IMR-90 (cell line): ENCODE measurements at regions of chr5 and their contacts with region 1.

Region 1: GRCh38 chr5:132506094-132506692 is 15.6 kb upstream of the IRF1 start:
- DNase-seq: peak; percentile 98
- ATAC-seq: peak; percentile 91
- H3K4me3 ChIP-seq: no peak overlapping the region
- H3K27ac ChIP-seq: peak overlapping the region; percentile 99
- H3K4me1 ChIP-seq: peaks cover 26% of the 10 kb centered on the region
- H3K27me3 ChIP-seq: no peaks in the 10 kb centered on the region
- CTCF ChIP-seq: peak; percentile 85
- POLR2A ChIP-seq: no peak
- RAD21 ChIP-seq: peak; percentile 65

Region 2: DNA sequence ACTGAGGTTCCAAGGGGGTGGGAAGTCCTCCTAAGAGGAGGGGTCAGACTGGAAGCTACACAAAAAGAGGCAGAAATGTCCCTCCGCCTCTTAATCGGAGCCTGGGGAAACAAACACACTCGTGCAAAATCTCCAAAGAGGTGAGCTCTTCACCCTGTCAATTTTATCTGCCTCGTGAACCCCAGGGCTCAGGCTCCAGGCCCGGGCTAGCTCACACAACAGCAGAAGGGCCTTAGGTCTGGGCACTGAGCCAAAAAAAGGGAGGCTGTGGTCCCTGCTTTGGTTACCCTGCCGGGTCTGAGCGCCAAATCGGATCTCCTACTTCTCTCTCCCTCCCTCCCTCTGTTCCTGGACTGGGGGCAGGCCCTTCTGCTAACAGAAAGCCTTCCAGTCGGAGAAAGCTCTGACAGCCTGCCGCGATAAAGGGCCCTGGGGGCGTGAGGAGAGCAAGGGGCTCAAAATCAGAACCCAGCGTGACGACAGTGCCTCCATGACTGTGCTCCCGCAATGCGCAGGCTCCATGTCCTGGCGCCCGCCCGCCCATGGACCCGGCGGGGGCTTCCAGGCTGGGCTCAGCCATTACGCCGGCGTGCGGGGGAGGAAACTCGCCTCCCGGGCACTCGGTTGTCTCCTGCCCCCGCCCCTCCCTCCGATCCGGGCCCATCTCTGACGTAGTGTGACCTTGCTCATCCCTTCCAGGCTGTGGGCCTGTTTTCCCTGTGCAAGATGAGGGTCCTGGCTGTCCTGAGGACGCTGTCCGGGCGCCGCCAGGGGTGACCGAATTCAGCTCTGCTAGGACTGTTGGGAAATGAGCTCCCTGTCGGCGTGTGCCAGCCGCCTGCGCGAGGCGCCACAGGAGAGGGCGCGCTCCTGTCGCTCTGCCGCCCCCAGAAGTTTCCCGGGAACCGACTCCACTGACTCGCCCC is 212.9 kb before region 1 on chr5:
- CTCF ChIA-PET with region 1: no interaction called
- POLR2A ChIA-PET with region 1: no interaction called
- dilution Hi-C with region 1: no loop called
- in situ Hi-C with region 1: no loop called
- intact Hi-C with region 1: loop called (anchors 5 kb)
- DNase-seq: peak; percentile 87
- ATAC-seq: peak; percentile 59
- H3K4me3 ChIP-seq: peak overlapping the region; percentile 74
- H3K27ac ChIP-seq: peak overlapping the region; percentile 99
- H3K4me1 ChIP-seq: peaks cover 12% of the 10 kb centered on the region
- H3K27me3 ChIP-seq: no peaks in the 10 kb centered on the region
- CTCF ChIP-seq: 0 out of 2 replicates have a peak, but pooled peaks have one; percentile 21
- POLR2A ChIP-seq: peak; percentile 63
- RAD21 ChIP-seq: no peak; the same call in 1 of the 2 replicates

Region 3: GRCh38 chr5:132426525-132427138 is 79.6 kb before region 1 on chr5:
- CTCF ChIA-PET with region 1: interaction called, 11 read pairs
- POLR2A ChIA-PET with region 1: no interaction called
- dilution Hi-C with region 1: no loop called
- in situ Hi-C with region 1: no loop called
- intact Hi-C with region 1: no loop called
- DNase-seq: peak; percentile 97
- ATAC-seq: peak; percentile 68
- H3K4me3 ChIP-seq: no peak overlapping the region
- H3K27ac ChIP-seq: peak overlapping the region; percentile 90
- H3K4me1 ChIP-seq: peaks cover 51% of the 10 kb centered on the region
- H3K27me3 ChIP-seq: no peaks in the 10 kb centered on the region
- CTCF ChIP-seq: peak; percentile 51
- POLR2A ChIP-seq: peak; percentile 69; the same call in 1 of the 2 replicates
- RAD21 ChIP-seq: peak; percentile 44

Region 4: GRCh38 chr5:132556763-132557477 is 50.7 kb after region 1 on chr5 and contains the start of gene RAD50:
- CTCF ChIA-PET with region 1: interaction called, 3 read pairs
- POLR2A ChIA-PET with region 1: interaction called, 3 read pairs
- dilution Hi-C with region 1: no loop called
- in situ Hi-C with region 1: no loop called
- intact Hi-C with region 1: loop called (anchors 5 kb)
- DNase-seq: peak; percentile 84
- ATAC-seq: peak; percentile 98
- H3K4me3 ChIP-seq: peak within 1 kb of the TSS; percentile 65
- H3K27ac ChIP-seq: peak within 1 kb of the TSS; percentile 68
- H3K4me1 ChIP-seq: no peaks in the 10 kb centered on the region; the same call in none of the 2 replicates
- H3K27me3 ChIP-seq: no peaks in the 10 kb centered on the region
- CTCF ChIP-seq: no peak
- POLR2A ChIP-seq: peak; percentile 72; the same call in 1 of the 2 replicates
- RAD21 ChIP-seq: no peak
- total RNA-seq, gene RAD50: 5.2 and 13.3 TPM in 2 replicates

Region 5: DNA sequence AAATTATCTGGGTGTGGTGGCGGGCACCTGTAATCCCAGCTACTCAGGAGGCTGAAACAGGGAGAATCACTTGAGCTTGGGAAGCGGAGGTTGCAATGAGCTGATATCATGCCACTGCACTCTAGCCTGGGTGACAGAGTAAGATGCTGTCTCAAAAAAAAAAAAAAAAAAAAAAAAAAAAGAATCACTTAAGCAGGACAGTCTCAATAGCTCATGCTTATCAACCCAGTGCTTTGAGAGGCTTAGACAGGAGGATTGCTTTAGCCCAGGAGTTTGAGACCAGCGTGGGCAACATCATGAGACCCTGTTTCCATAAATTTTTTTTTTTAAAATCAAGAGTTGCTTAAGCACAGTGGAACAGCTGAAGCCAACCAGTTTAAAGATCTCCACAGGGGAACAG is 409.9 kb after region 1 on chr5:
- CTCF ChIA-PET with region 1: no interaction called
- POLR2A ChIA-PET with region 1: no interaction called
- dilution Hi-C with region 1: no loop called
- in situ Hi-C with region 1: no loop called
- intact Hi-C with region 1: no loop called
- DNase-seq: no peak
- ATAC-seq: no peak
- H3K4me3 ChIP-seq: no peak overlapping the region
- H3K27ac ChIP-seq: no peak overlapping the region
- H3K4me1 ChIP-seq: no peaks in the 10 kb centered on the region
- H3K27me3 ChIP-seq: no peaks in the 10 kb centered on the region
- CTCF ChIP-seq: no peak
- POLR2A ChIP-seq: no peak
- RAD21 ChIP-seq: no peak